ENCODE measurements at regions of chr4 and their contacts with region 1.

Region 1: DNA sequence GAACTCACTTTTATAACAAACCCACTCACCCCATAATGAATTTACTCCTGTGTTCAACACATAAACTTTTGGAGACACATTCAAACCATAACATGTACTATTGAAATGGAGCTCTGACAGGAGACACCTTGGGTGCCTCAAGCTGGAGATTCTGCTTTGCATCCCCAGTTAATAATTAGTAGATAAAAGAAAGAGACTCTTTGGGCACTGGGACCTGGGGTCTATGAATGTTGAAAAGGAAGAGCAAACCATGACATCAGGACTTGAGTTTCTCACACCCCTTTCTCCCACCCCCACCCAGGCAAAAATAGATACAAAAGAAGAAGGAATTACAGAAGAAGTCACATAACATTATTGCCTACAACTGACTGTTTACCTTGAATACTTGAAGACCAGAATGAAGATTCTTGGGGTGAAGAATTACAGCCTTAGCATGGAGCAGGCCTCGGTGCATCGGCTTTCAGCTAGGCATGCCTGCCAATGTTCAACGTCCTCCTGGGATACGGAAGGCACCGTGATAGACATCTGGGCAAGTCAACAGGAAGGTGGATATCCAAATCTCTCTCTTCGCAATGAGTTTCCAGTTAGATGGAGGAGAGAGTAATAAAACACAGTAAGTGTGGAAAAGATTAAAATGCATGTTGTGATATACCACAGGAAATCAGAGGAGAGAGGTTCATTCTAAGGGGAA is 316.0 kb downstream of the TRIML1 start:
- DNase-seq: no peak
- ATAC-seq: no peak
- H3K4me3 Mint-ChIP-seq: no peak overlapping the region
- H3K27ac Mint-ChIP-seq: no peak overlapping the region; the same call in 1 of the 2 replicates
- H3K4me1 Mint-ChIP-seq: peaks cover 70% of the 10 kb centered on the region
- H3K27me3 Mint-ChIP-seq: no peaks in the 10 kb centered on the region
- CTCF ChIP-seq: no peak

Region 2: DNA sequence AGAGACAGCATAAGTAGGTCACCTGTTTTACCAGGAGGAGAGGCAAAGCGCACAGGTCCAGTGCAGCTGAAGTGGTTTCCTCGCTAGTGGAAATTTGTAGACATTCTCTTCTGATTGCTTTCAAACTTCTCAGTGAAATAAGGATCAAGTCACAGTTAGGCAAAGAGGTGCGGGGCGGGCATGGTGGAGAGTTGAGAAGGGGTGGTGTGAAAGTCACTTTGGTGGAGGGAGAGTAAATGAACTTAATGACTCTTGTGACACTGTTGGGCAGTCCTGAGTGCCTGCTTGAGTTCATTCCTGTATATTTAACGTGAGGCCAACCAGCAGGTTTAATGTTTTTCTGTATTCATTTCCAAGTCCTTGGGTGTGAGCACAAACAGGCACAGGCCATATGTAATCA is 80.3 kb before region 1 on chr4:
- CTCF ChIA-PET with region 1: no interaction called
- POLR2A ChIA-PET with region 1: no interaction called
- DNase-seq: no peak
- ATAC-seq: no peak
- H3K4me3 Mint-ChIP-seq: no peak overlapping the region
- H3K27ac Mint-ChIP-seq: no peak overlapping the region
- H3K4me1 Mint-ChIP-seq: peaks cover 4% of the 10 kb centered on the region; the same call in 1 of the 2 replicates
- H3K27me3 Mint-ChIP-seq: peaks cover 3% of the 10 kb centered on the region; the same call in 1 of the 2 replicates
- CTCF ChIP-seq: no peak

Region 3: GRCh38 chr4:188403272-188403671 is 51.9 kb before region 1 on chr4:
- CTCF ChIA-PET with region 1: interaction called, 10 read pairs
- POLR2A ChIA-PET with region 1: no interaction called
- DNase-seq: peak; percentile 41
- ATAC-seq: peak; percentile 68
- H3K4me3 Mint-ChIP-seq: no peak overlapping the region
- H3K27ac Mint-ChIP-seq: no peak overlapping the region; the same call in 1 of the 2 replicates
- H3K4me1 Mint-ChIP-seq: peaks cover 61% of the 10 kb centered on the region
- H3K27me3 Mint-ChIP-seq: no peaks in the 10 kb centered on the region
- CTCF ChIP-seq: no peak

Region 4: DNA sequence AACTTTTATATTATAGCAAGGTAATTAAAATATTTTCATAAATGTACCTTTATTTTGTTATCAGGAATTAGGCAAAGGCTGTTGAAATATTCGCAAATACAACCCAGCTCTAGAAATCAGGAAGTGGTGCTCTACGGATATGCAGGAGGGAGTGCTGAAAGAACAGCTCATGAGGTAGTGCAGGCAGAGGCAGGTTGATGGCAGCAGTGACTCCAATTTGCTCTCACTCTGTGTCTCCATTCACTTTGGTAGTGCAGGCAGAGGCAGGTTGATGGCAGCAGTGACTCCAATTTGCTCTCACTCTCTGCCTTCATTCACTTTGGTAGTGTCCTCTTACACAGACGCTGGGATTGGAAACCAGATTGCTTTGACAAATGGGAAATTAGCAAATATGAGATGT is 38.0 kb before region 1 on chr4:
- CTCF ChIA-PET with region 1: interaction called, 10 read pairs
- POLR2A ChIA-PET with region 1: no interaction called
- DNase-seq: peak; percentile 34
- ATAC-seq: peak; percentile 98
- H3K4me3 Mint-ChIP-seq: no peak overlapping the region
- H3K27ac Mint-ChIP-seq: no peak overlapping the region
- H3K4me1 Mint-ChIP-seq: peaks cover 8% of the 10 kb centered on the region
- H3K27me3 Mint-ChIP-seq: no peaks in the 10 kb centered on the region
- CTCF ChIP-seq: no peak

Region 5: GRCh38 chr4:188439641-188440311 is 15.4 kb before region 1 on chr4:
- CTCF ChIA-PET with region 1: interaction called, 10 read pairs
- POLR2A ChIA-PET with region 1: no interaction called
- DNase-seq: no peak
- ATAC-seq: peak; percentile 38; the same call in 1 of the 2 replicates
- H3K4me3 Mint-ChIP-seq: no peak overlapping the region
- H3K27ac Mint-ChIP-seq: no peak overlapping the region
- H3K4me1 Mint-ChIP-seq: peaks cover 38% of the 10 kb centered on the region
- H3K27me3 Mint-ChIP-seq: peaks cover 2% of the 10 kb centered on the region; the same call in 1 of the 2 replicates
- CTCF ChIP-seq: no peak

Measured in WTC11 (cell line).